Heart right ventricle (tissue), 16 donors: ENCODE measurements at regions of chr20 and their contacts with region 1.

Region 1: GRCh38 chr20:58888521-58889333 is 36.2 kb downstream of the GNAS start:
- DNase-seq: peak; percentile 83
- ATAC-seq: peak; percentile 36 to 73 (median 65)
- H3K4me3 ChIP-seq: peak overlapping the region; percentile 37 to 92 (median 82)
- H3K27ac ChIP-seq: peak overlapping the region; percentile 90 to 100 (median 98)
- H3K4me1 ChIP-seq: peaks cover 0 to 17% (median 14%) of the 10 kb centered on the region in 9 donors
- H3K27me3 ChIP-seq: no peaks in the 10 kb centered on the region
- CTCF ChIP-seq: no peak

Region 2: GRCh38 chr20:58907399-58908137 is 18.8 kb after region 1 on chr20:
- intact Hi-C with region 1: loop called in 1 of 10 experiments (anchors 2 kb)
- DNase-seq: peak; percentile 72 to 97
- ATAC-seq: peak; percentile 91 to 98 (median 97)
- H3K4me3 ChIP-seq: peak overlapping the region in 8 of 10 donors; percentile 6 to 44 (median 32)
- H3K27ac ChIP-seq: peak overlapping the region; percentile 44 to 93 (median 82)
- H3K4me1 ChIP-seq: peaks cover 16 to 76% (median 51%) of the 10 kb centered on the region in 9 donors
- H3K27me3 ChIP-seq: no peaks in the 10 kb centered on the region
- CTCF ChIP-seq: no peak

Region 3: GRCh38 chr20:58950603-58951002 is 61.9 kb after region 1 on chr20:
- intact Hi-C with region 1: no loop called
- DNase-seq: no peak
- ATAC-seq: no peak
- H3K4me3 ChIP-seq: no peak overlapping the region
- H3K27ac ChIP-seq: no peak overlapping the region
- H3K4me1 ChIP-seq: no peaks in the 10 kb centered on the region
- H3K27me3 ChIP-seq: no peaks in the 10 kb centered on the region
- CTCF ChIP-seq: peak in 1 of 9 donors; percentile 23

Region 4: GRCh38 chr20:58980700-58981627 is 92.2 kb after region 1 on chr20 and contains the start of gene NELFCD:
- intact Hi-C with region 1: loop called in 4 of 10 experiments (anchors 2 to 5 kb)
- DNase-seq: peak; percentile 86 to 92
- ATAC-seq: peak; percentile 92 to 97 (median 94)
- H3K4me3 ChIP-seq: peak within 1 kb of the TSS; percentile 47 to 82 (median 68)
- H3K27ac ChIP-seq: peak within 1 kb of the TSS; percentile 63 to 91 (median 87)
- H3K4me1 ChIP-seq: peaks cover 0 to 45% (median 35%) of the 10 kb centered on the region in 9 donors
- H3K27me3 ChIP-seq: no peaks in the 10 kb centered on the region
- CTCF ChIP-seq: no peak
- total RNA-seq, gene NELFCD: 23.2 to 40.5 (median 31.1) TPM

Region 5: GRCh38 chr20:59007665-59008511 is 119.2 kb after region 1 on chr20:
- intact Hi-C with region 1: loop called in 1 of 10 experiments (anchors 10 kb)
- DNase-seq: peak in 1 of 2 donors; percentile 49
- ATAC-seq: peak in 1 of 8 donors; percentile 2
- H3K4me3 ChIP-seq: peak overlapping the region; percentile 65 to 95 (median 86)
- H3K27ac ChIP-seq: peak overlapping the region; percentile 75 to 98 (median 90)
- H3K4me1 ChIP-seq: peaks cover 21 to 81% (median 54%) of the 10 kb centered on the region in 9 donors
- H3K27me3 ChIP-seq: no peaks in the 10 kb centered on the region
- CTCF ChIP-seq: no peak

Region 6: GRCh38 chr20:59032023-59032712 is 143.4 kb after region 1 on chr20 and contains the start of gene ATP5F1E:
- intact Hi-C with region 1: loop called in 7 of 10 experiments (anchors 5 to 10 kb)
- DNase-seq: peak; percentile 95 to 97
- ATAC-seq: peak; percentile 99 to 100 (median 100)
- H3K4me3 ChIP-seq: peak within 1 kb of the TSS; percentile 55 to 96 (median 82)
- H3K27ac ChIP-seq: peak within 1 kb of the TSS; percentile 83 to 96 (median 94)
- H3K4me1 ChIP-seq: peaks cover 17 to 56% (median 47%) of the 10 kb centered on the region in 9 donors
- H3K27me3 ChIP-seq: no peaks in the 10 kb centered on the region
- CTCF ChIP-seq: no peak
- total RNA-seq, gene ATP5F1E: 105 to 155 (median 121) TPM

Region 7: GRCh38 chr20:59042796-59043660 is 154.3 kb after region 1 on chr20:
- intact Hi-C with region 1: loop called in 3 of 10 experiments (anchors 2 to 10 kb)
- DNase-seq: peak; percentile 91 to 96
- ATAC-seq: peak; percentile 98 to 99 (median 99)
- H3K4me3 ChIP-seq: peak overlapping the region; percentile 64 to 93 (median 86)
- H3K27ac ChIP-seq: peak overlapping the region; percentile 21 to 93 (median 89)
- H3K4me1 ChIP-seq: peaks cover 4 to 42% (median 37%) of the 10 kb centered on the region in 9 donors
- H3K27me3 ChIP-seq: no peaks in the 10 kb centered on the region
- CTCF ChIP-seq: peak in 1 of 9 donors; percentile 35

Region 8: DNA sequence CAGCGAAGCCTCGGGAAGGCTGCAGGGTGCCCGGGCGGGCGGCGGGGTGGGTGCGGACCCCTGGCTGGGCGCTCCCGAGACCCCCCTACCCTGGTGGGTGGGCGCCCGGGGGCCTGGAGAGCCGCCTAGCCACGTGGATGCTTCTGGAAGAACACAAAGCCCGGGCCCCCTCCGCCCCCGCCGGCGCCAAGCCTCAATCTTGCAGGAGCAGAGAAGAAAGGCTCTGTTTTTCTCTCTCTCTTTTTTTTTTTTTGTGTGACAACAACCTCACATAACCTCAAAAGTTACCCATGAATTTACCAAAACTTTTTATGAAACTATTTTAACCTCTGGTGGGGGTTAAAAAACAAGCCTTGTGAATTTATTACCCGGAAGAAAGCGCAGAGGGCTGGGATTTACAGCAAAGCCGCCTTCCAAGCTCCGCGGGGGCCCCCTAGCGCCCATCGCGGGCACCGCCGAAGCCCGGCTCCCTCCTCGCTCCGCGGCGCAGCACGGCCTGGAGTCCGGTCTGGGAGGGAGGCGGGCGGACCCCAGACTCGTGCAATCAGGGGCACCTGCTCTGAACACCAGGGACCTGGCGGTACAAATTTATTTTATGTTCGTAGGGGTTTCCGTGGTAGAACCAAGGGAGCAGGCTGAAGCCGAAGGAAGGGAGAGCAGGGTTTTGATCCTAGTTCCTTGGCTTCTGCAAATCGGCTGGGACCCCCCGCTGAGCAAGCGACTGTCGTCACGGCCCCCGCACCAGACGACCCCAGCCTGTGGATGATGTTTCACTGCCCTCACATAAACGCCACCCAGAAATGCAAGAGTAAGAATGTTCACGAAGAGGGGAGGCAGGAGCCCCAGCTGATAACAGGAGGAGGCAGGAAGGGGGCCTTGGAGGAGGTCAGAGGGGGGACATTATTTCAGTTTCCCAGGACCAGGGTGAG is 333.8 kb after region 1 on chr20:
- intact Hi-C with region 1: loop called in 1 of 10 experiments (anchors 5 kb)
- DNase-seq: peak; percentile 77 to 87
- ATAC-seq: peak; percentile 85 to 95 (median 93)
- H3K4me3 ChIP-seq: peak overlapping the region; percentile 22 to 64 (median 60)
- H3K27ac ChIP-seq: peak overlapping the region in 9 of 10 donors; percentile 25 to 84 (median 75)
- H3K4me1 ChIP-seq: peaks cover 9 to 28% (median 21%) of the 10 kb centered on the region in 9 donors
- H3K27me3 ChIP-seq: peaks cover 0 to 52% (median 33%) of the 10 kb centered on the region in 7 donors
- CTCF ChIP-seq: peak; percentile 90 to 99 (median 96)